PC-3 (cell line): ENCODE measurements at regions of chr13 and their contacts with region 1.

Region 1: GRCh38 chr13:89150362-89150761 is 1479.2 kb downstream of the SLITRK5 start:
- DNase-seq: peak; percentile 25
- ATAC-seq: peak; percentile 29; the same call in 1 of the 2 replicates
- H3K4me3 ChIP-seq: no peak overlapping the region
- H3K27ac ChIP-seq: no peak overlapping the region
- H3K4me1 ChIP-seq: peaks cover 9% of the 10 kb centered on the region; the same call in 1 of the 2 replicates
- H3K27me3 ChIP-seq: no peaks in the 10 kb centered on the region
- CTCF ChIP-seq: no peak

Region 2: GRCh38 chr13:89205856-89206520 is 55.6 kb after region 1 on chr13:
- CTCF ChIA-PET with region 1: no interaction called
- POLR2A ChIA-PET with region 1: no interaction called
- intact Hi-C with region 1: no loop called
- DNase-seq: no peak
- ATAC-seq: no peak
- H3K4me3 ChIP-seq: no peak overlapping the region
- H3K27ac ChIP-seq: no peak overlapping the region
- H3K4me1 ChIP-seq: no peaks in the 10 kb centered on the region
- H3K27me3 ChIP-seq: no peaks in the 10 kb centered on the region
- CTCF ChIP-seq: no peak

Region 3: DNA sequence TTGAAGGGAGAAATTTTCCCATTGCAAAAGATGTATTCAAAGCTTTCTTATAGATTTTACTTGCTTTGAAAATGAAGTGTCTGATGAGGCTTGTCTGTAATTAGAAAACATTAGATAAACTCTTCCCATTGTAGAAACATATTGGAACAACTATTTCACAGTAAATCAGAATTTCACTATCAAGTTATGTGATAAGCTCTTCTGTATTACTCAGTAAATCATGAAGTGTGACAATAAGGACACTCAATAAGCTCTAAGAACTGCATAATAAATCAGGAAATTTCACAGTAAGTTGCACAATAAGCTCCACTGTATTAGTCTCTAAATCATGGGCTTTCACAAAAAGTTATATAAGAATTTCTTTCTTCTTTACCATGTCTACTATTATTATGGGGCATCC is 67.5 kb after region 1 on chr13:
- CTCF ChIA-PET with region 1: no interaction called
- POLR2A ChIA-PET with region 1: no interaction called
- intact Hi-C with region 1: no loop called
- DNase-seq: no peak
- ATAC-seq: no peak
- H3K4me3 ChIP-seq: no peak overlapping the region
- H3K27ac ChIP-seq: no peak overlapping the region
- H3K4me1 ChIP-seq: no peaks in the 10 kb centered on the region
- H3K27me3 ChIP-seq: no peaks in the 10 kb centered on the region
- CTCF ChIP-seq: no peak

Region 4: DNA sequence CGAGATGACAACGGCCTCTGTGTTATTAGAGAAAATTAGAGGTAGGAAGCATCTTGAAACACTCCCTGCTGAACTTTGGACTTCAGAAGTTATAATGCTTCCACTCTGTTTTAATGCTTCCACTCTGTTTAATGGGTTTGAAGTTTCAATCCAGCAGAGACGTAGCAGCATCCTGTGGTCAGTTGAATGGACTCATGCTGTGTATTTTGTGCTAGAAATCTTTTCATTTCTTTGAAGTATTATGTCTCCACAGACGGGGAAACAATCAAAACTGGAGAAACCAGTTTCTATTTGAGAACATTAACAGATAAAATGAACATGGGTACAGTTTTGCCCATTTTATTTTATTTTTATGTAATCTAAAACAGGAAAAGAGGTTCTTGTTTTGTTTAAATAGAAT is 257.0 kb after region 1 on chr13:
- CTCF ChIA-PET with region 1: no interaction called
- POLR2A ChIA-PET with region 1: no interaction called
- intact Hi-C with region 1: loop called (anchors 10 kb)
- DNase-seq: peak; percentile 45
- ATAC-seq: no peak
- H3K4me3 ChIP-seq: no peak overlapping the region
- H3K27ac ChIP-seq: no peak overlapping the region
- H3K4me1 ChIP-seq: peaks cover 11% of the 10 kb centered on the region; the same call in 1 of the 2 replicates
- H3K27me3 ChIP-seq: no peaks in the 10 kb centered on the region
- CTCF ChIP-seq: no peak

Region 5: DNA sequence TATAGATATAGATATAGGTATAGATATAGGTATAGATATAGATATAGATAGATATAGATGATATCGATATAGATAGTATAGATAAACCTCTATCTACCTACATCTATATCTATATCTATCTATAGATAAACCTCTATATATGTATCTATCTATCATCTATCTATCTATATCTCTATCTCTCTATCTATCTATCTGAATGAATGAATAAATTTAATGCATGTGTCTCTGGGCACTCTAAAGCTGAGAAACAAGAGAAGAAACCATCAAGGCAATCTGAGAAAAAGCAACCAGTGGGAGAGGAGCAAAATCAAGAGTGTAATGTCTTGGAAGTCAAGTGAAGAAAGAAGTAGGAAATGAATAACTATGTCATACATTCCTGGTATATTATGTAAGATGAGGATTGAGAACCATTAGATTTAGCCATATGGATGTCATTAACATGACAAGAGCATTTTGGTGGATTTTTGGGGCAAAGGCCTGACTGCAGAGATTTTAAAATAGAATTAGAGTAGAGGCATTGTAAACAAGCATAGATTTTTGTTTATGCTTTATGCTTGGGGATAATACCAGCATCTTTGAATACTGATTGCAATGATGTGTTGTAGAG is 934.4 kb after region 1 on chr13:
- CTCF ChIA-PET with region 1: no interaction called
- POLR2A ChIA-PET with region 1: no interaction called
- intact Hi-C with region 1: no loop called
- DNase-seq: no peak
- ATAC-seq: no peak
- H3K4me3 ChIP-seq: no peak overlapping the region
- H3K27ac ChIP-seq: no peak overlapping the region
- H3K4me1 ChIP-seq: no peaks in the 10 kb centered on the region
- H3K27me3 ChIP-seq: no peaks in the 10 kb centered on the region
- CTCF ChIP-seq: no peak